Right cardiac atrium (tissue), 5 donors: ENCODE measurements at regions of chr1 and their contacts with region 1.

Region 1: GRCh38 chr1:228118040-228118439 is 8.9 kb upstream of the MRPL55 start:
- DNase-seq: no peak
- ATAC-seq: no peak
- H3K4me3 ChIP-seq: no peak overlapping the region
- H3K27ac ChIP-seq: no peak overlapping the region
- H3K4me1 ChIP-seq: no peaks in the 10 kb centered on the region
- H3K27me3 ChIP-seq: no peaks in the 10 kb centered on the region

Region 2: DNA sequence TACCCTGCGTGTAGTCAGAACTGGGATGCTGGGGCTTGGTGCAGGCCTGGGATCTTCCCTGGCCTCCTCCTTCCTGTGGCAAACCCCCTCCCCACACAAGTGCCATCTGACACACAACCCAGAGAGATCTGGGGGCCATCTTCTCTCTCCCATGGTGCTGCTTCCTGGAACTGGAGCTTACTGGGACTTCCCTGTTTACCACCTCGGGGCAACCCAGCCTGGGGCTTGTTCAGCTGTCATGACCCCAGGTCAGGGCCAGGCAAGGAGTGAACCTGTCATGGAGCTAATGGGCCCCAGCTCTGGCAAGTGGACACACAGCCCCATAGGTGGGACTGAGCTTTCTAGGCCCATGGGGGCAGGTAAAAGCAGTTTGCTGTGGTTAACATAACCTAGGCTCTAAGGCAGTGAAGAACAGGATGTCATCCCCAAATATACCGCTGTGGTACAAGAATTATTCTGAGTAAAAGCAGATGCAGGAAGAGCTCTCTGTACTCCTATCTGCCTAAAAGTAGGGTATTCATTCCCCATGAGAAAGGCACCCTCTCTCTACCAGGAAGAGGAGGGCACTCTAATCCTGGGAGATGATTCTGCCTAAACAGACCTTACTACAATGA is 286.2 kb after region 1 on chr1:
- intact Hi-C with region 1: loop called in 1 of 4 experiments (anchors 5 kb)
- DNase-seq: no peak
- ATAC-seq: no peak
- H3K4me3 ChIP-seq: no peak overlapping the region
- H3K27ac ChIP-seq: no peak overlapping the region
- H3K4me1 ChIP-seq: peaks cover 9% of the 10 kb centered on the region
- H3K27me3 ChIP-seq: no peaks in the 10 kb centered on the region